PC-9 (cell line): ENCODE measurements at regions of chr1 and their contacts with region 1.

Region 1: GRCh38 chr1:45187725-45188124 is 18.7 kb downstream of the ZSWIM5 start:
- DNase-seq: no peak
- H3K4me3 ChIP-seq: no peak overlapping the region
- H3K27ac ChIP-seq: no peak overlapping the region
- H3K4me1 ChIP-seq: no peaks in the 10 kb centered on the region
- H3K27me3 ChIP-seq: no peaks in the 10 kb centered on the region
- CTCF ChIP-seq: no peak

Region 2: DNA sequence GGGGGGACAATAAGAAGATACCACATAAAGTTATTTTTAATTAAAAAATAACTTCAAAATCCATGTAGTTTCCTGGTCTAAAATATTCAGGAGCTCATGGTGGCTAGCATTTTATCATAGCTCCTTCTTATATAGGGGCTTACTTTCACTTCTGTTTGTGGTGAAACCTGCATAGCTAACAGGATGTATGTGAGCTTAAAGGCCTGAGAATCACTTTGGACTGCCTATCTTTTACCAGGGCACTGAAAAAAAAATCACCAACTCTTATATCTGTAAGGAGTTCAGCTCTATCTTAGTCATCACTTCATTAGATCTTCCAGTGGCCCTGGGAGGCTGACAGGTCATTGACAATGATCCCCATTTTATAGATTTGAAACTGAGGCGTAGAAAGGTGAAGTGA is 154.4 kb before region 1 on chr1:
- CTCF ChIA-PET with region 1: interaction called, 13 read pairs
- POLR2A ChIA-PET with region 1: no interaction called
- intact Hi-C with region 1: no loop called
- DNase-seq: no peak
- H3K4me3 ChIP-seq: no peak overlapping the region
- H3K27ac ChIP-seq: no peak overlapping the region
- H3K4me1 ChIP-seq: peaks cover 10% of the 10 kb centered on the region; the same call in 1 of the 2 replicates
- H3K27me3 ChIP-seq: no peaks in the 10 kb centered on the region
- CTCF ChIP-seq: no peak

Region 3: DNA sequence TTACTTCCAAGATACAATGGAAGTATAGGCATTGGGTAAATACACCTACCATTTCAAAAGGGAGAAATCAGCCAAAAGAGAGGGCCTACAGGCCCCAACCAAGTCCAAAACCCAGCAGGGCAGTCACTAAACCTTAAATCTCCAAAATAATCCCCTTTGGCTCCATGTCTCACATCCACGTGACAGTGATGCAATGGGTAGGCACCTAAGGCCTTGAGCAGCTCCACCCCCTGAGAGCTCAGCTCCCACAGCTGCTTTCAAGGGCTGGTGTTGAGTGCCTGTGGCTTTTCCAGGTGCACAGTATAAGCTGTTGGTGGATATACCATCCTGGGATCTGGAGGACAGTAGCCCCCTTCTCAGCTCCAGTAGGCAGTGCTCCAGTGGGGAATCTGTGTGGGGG is 103.2 kb before region 1 on chr1:
- CTCF ChIA-PET with region 1: no interaction called
- POLR2A ChIA-PET with region 1: no interaction called
- intact Hi-C with region 1: no loop called
- DNase-seq: no peak
- H3K4me3 ChIP-seq: no peak overlapping the region
- H3K27ac ChIP-seq: no peak overlapping the region
- H3K4me1 ChIP-seq: no peaks in the 10 kb centered on the region
- H3K27me3 ChIP-seq: no peaks in the 10 kb centered on the region
- CTCF ChIP-seq: no peak

Region 4: GRCh38 chr1:45134468-45134873 is 53.3 kb before region 1 on chr1:
- CTCF ChIA-PET with region 1: no interaction called
- POLR2A ChIA-PET with region 1: no interaction called
- intact Hi-C with region 1: no loop called
- DNase-seq: no peak
- H3K4me3 ChIP-seq: no peak overlapping the region
- H3K27ac ChIP-seq: no peak overlapping the region
- H3K4me1 ChIP-seq: no peaks in the 10 kb centered on the region
- H3K27me3 ChIP-seq: no peaks in the 10 kb centered on the region
- CTCF ChIP-seq: no peak

Region 5: DNA sequence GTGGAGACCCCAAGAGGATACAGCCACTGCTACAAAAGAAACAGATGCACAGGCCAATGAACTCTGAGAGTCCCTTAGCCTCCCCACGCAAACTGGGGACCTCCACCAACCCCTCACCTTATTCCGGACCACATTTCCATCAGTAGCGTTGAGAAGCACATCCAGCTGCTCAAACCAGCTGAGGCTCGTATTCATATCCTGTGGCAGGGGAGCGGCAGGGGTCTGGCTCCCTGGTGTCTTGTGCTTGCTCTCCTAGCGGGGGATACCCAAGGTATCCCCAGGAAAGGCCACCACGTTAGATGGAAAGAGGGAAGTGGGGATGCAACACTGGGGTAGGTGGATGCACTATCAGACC is 311.7 kb after region 1 on chr1:
- CTCF ChIA-PET with region 1: no interaction called
- POLR2A ChIA-PET with region 1: interaction called, 37 read pairs
- intact Hi-C with region 1: no loop called
- DNase-seq: no peak
- H3K4me3 ChIP-seq: peak overlapping the region; percentile 79
- H3K27ac ChIP-seq: no peak overlapping the region
- H3K4me1 ChIP-seq: peaks cover 18% of the 10 kb centered on the region
- H3K27me3 ChIP-seq: no peaks in the 10 kb centered on the region
- CTCF ChIP-seq: no peak